ENCODE measurements at regions of chr11 and their contacts with region 1.

Region 1: DNA sequence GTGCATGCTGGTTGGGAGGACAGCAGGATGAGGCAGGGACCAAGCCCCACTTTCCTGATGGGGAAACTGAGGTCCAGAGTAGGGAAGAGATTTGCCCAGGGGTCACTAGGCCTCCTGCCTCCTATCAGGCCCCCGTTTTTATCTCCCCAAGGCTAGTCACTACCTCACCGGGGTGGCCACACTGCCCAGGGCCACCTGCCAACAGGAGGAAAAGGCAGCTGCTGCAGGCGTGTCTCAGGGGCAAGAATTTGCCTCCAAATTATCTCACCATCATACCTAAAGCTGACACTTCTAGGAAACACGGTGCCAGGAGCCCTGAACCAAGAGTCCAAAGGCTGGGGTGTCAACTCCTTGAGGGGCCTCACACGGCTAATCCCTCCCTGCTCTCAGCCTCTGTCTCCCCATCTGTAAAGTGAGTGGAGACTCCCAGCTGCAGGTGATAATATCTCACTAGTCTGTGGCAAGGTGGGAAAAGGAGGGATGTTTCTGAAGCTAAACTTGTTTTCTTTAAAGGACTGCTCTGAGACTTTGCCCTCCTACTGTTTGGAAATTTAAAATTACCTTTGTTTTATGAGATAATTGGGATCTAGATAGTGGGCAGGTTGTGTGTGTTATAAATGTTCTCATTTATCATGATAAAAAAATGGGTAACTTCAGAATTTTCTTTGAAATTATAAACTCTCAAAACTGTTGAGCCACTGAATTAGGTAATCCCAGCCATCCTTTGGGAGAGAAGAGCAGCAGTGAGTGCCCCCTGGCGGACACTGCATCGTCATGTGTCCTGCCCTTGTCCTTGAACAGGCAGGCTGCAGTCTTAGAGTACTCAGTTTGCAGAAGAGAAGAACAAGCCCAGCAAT is 60.0 kb downstream of the MYO7A start:
- DNase-seq: peak; percentile 69 to 81
- H3K4me3 ChIP-seq: no peak overlapping the region
- H3K27ac ChIP-seq: no peak overlapping the region
- H3K4me1 ChIP-seq: peaks cover 8% of the 10 kb centered on the region
- H3K27me3 ChIP-seq: peaks cover 28% of the 10 kb centered on the region
- CTCF ChIP-seq: peak; percentile 99

Region 2: DNA sequence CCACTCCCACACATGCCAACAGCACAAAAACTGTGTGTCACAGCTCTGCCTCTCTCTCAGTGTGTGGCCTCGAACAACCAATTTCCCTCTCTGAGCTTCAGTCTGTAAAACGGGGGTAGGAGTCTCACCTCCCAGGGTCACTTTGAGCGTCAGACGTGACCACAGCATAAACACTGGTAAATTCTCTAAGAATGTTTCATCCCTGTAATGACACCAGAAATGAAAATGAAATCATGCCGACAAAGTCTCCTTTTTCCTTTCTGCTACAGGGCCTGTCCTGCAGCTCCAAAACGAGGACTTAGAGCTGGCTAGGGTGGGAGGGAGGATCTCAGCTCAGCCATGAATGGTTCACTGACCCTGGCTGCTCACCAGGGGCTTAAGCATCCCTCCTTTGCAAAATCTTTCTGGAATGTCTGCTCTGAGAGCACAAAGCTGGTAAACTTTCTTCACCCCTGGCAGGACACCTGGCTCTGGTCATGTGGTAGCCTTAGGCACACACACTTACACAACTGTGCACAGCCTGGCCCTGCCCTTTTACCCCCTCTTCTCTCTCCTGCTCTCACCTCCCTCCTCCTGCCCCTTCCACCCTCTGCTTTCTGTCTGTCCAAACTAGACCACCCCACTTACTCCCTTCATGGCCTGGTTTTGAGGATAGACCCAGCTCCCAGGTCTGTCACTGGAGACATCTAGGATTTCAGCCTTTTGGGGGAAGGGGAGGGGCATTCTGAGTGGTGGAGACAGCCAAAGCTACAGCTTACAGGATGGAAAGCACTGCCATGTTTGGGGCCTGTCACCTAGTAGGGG is 417.2 kb before region 1 on chr11:
- CTCF ChIA-PET with region 1: no interaction called
- POLR2A ChIA-PET with region 1: no interaction called
- intact Hi-C with region 1: no loop called
- DNase-seq: peak; percentile 81 to 97
- H3K4me3 ChIP-seq: peak overlapping the region; percentile 69; the same call in 1 of the 2 replicates
- H3K27ac ChIP-seq: peak overlapping the region; percentile 99
- H3K4me1 ChIP-seq: peaks cover 81% of the 10 kb centered on the region
- H3K27me3 ChIP-seq: no peaks in the 10 kb centered on the region
- CTCF ChIP-seq: no peak

Region 3: DNA sequence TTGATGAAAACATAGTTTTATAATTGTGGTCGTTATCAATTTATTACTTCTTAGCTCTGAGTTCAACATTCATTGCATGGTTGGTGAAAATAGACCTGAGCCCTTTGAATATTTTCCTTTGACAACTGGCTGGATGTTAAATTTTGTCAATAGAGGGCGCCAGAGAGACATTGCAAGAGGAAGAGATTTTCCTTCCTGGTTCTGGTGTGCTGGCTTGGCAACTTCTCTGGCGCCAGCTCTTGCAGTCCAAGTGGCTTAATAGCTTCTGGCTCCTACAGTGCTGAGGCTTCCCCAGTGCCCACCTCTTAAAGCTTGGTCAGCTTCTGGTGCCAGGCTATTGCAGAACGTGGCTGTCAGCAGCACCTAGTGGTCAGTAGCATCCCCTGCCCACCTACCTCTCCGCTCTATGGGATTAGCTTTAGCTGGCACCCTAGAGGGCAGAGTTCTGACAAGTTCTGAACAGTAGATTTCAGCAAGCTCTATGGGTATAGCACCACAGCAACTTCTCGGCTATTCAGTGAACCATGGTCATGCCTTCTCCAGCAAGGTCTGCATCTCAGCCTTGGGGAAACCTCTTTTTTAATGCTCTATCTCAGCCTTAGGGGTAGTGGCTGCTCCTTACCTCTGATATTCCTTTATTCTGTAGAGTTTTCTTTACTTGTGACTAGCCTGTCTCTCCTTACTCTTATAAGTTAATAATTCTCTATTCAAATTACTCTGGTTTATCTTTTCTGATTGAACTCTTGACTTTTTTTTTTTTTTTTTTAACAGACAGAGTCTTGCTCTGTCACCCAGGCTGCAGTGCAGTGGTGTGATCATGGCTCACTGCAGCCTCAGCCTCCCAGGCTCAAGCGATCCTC is 267.9 kb before region 1 on chr11:
- CTCF ChIA-PET with region 1: interaction called, 4 read pairs
- POLR2A ChIA-PET with region 1: no interaction called
- intact Hi-C with region 1: loop called (anchors 1 kb)
- DNase-seq: peak; percentile 67 to 68
- H3K4me3 ChIP-seq: no peak overlapping the region
- H3K27ac ChIP-seq: no peak overlapping the region
- H3K4me1 ChIP-seq: peaks cover 12% of the 10 kb centered on the region
- H3K27me3 ChIP-seq: no peaks in the 10 kb centered on the region
- CTCF ChIP-seq: peak; percentile 96

Region 4: GRCh38 chr11:77127232-77127911 is 60.6 kb before region 1 on chr11:
- CTCF ChIA-PET with region 1: interaction called, 9 read pairs
- POLR2A ChIA-PET with region 1: interaction called, 4 read pairs
- intact Hi-C with region 1: loop called (anchors 1 kb)
- DNase-seq: peak in 1 of 2 experiments; percentile 59
- H3K4me3 ChIP-seq: peak overlapping the region; percentile 44; the same call in 1 of the 2 replicates
- H3K27ac ChIP-seq: no peak overlapping the region
- H3K4me1 ChIP-seq: no peaks in the 10 kb centered on the region
- H3K27me3 ChIP-seq: no peaks in the 10 kb centered on the region
- CTCF ChIP-seq: peak; percentile 98

Region 5: GRCh38 chr11:77175869-77176539 is 12.0 kb before region 1 on chr11:
- CTCF ChIA-PET with region 1: no interaction called
- POLR2A ChIA-PET with region 1: no interaction called
- intact Hi-C with region 1: no loop called
- DNase-seq: no peak
- H3K4me3 ChIP-seq: no peak overlapping the region
- H3K27ac ChIP-seq: no peak overlapping the region
- H3K4me1 ChIP-seq: no peaks in the 10 kb centered on the region
- H3K27me3 ChIP-seq: peaks cover 22% of the 10 kb centered on the region
- CTCF ChIP-seq: no peak

Region 6: GRCh38 chr11:77473801-77474683 is 286.0 kb after region 1 on chr11 and contains the start of gene PAK1:
- CTCF ChIA-PET with region 1: no interaction called
- POLR2A ChIA-PET with region 1: interaction called, 8 read pairs
- intact Hi-C with region 1: loop called (anchors 5 kb)
- DNase-seq: peak; percentile 83 to 93
- H3K4me3 ChIP-seq: peak within 1 kb of the TSS; percentile 83
- H3K27ac ChIP-seq: peak within 1 kb of the TSS; percentile 18
- H3K4me1 ChIP-seq: peaks cover 36% of the 10 kb centered on the region
- H3K27me3 ChIP-seq: no peaks in the 10 kb centered on the region
- CTCF ChIP-seq: peak; percentile 43
- total RNA-seq, gene PAK1: 80.0 and 109 TPM in 2 replicates

Region 7: DNA sequence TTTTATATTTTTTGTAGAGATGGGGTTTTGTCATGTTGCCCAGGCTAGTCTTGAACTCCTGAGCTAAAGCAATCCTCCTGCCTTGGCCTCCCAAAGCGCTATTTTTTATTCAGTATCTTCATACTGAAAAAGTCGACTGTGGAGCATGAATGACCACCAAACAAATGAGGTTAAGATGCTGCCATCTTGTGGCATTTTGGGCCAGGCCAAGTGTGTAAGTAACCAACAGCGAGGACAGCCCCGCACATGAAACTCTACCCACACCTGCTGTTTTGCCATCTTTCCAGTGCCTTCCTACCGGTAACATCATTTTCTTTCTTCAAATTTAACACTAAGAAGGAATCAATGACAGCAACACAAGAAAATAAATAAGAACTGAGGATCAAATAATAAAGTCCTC is 369.6 kb after region 1 on chr11:
- CTCF ChIA-PET with region 1: no interaction called
- POLR2A ChIA-PET with region 1: no interaction called
- intact Hi-C with region 1: loop called (anchors 1 kb)
- DNase-seq: peak in 1 of 2 experiments; percentile 23
- H3K4me3 ChIP-seq: no peak overlapping the region
- H3K27ac ChIP-seq: no peak overlapping the region
- H3K4me1 ChIP-seq: peaks cover 14% of the 10 kb centered on the region
- H3K27me3 ChIP-seq: no peaks in the 10 kb centered on the region
- CTCF ChIP-seq: peak; percentile 50

Region 8: DNA sequence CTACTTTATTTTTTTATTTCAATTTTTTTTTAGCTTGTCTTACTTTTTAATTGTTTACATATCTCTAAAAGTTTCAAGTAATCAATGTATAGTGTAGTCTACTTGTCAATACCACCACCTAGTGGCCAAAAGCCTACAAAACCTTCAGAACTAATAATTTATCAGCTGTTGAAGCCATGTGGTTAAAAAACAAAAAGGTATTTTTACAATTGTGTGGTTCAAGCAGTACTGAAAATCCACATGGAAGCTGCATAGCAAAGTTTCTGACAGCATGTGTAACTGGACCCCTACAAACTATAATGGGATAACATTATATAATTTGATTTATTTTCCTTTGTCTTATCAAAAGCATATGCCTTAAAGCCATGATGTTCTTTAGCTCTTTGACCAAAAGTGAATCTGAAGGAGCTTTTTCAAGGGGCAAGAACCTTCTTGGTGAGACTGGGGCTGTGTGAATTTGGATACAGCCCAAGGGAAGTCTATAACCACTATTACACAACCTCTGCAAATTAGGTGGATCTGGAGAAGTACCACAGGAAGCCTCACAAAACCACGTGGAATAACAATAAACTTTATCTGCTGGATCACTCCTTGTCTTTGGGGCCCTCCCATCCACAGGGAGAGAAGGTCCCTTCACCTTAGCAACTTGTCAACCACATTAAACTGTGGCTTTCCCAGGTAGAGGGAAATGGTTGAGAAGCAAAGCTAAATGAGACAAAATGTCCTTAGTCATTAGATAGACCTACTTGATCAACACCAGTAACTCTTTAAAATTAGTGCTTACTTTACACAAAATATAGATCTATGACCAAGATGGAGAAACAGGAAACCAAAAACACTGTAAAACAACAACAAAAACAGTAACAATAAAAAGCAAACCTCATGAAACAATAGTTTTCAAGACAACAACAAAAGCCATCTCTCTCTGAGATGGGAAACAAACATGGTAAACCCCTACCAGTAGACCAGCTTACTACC is 1376.8 kb after region 1 on chr11:
- CTCF ChIA-PET with region 1: no interaction called
- POLR2A ChIA-PET with region 1: no interaction called
- intact Hi-C with region 1: loop called (anchors 1 kb)
- DNase-seq: peak; percentile 38 to 66
- H3K4me3 ChIP-seq: no peak overlapping the region
- H3K27ac ChIP-seq: no peak overlapping the region
- H3K4me1 ChIP-seq: peaks cover 7% of the 10 kb centered on the region; the same call in 1 of the 2 replicates
- H3K27me3 ChIP-seq: no peaks in the 10 kb centered on the region
- CTCF ChIP-seq: peak; percentile 97